Dendritic cell treated with granulocyte-macrophage colony-stimulating factor and Interleukin-4, amounts not matched to agents 40 ng/mL and 50 ng/mL, for 4 days (primary cell): ENCODE measurements at regions of chr9 and their contacts with region 1.

Region 1: DNA sequence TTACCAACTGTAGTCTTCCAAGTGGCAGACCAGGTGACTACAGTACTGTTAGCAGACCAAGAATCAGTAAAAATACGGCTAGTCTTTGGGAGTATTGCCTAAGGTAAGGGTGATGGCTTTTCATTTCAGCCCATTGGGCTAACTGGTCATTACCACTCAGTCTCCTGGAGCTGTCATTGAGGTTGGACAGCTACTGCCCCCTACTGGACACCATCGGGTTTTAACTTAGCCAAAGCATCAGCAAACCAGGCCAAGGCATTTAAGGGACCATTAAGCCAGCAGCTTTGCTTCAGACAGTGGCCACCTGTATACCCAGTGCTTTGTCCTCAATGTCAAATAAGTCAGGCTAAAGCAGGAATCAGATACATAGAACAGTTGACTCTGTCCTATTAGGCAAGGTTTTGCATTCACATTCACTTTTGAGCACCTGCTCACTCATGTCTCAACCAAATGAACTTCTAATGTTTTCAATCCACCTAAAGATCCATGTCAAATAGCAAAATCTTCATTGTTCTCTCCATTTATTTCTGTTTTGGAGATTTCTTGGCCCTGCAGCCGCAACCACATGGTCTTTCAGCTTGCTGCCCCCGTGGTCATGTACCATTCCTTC is 117.2 kb downstream of the INVS start:
- H3K4me3 Mint-ChIP-seq: no peak overlapping the region
- H3K27ac Mint-ChIP-seq: no peak overlapping the region
- H3K4me1 Mint-ChIP-seq: peaks cover 8% of the 10 kb centered on the region
- H3K27me3 Mint-ChIP-seq: no peaks in the 10 kb centered on the region

Region 2: GRCh38 chr9:99162759-99163364 is 1053.4 kb before region 1 on chr9:
- intact Hi-C with region 1: loop called (anchors 10 kb)
- H3K4me3 Mint-ChIP-seq: no peak overlapping the region
- H3K27ac Mint-ChIP-seq: no peak overlapping the region
- H3K4me1 Mint-ChIP-seq: peaks cover 5% of the 10 kb centered on the region
- H3K27me3 Mint-ChIP-seq: peaks cover 12% of the 10 kb centered on the region

Region 3: GRCh38 chr9:99266255-99267023 is 949.8 kb before region 1 on chr9:
- intact Hi-C with region 1: loop called (anchors 10 kb)
- H3K4me3 Mint-ChIP-seq: no peak overlapping the region
- H3K27ac Mint-ChIP-seq: no peak overlapping the region
- H3K4me1 Mint-ChIP-seq: peaks cover 23% of the 10 kb centered on the region
- H3K27me3 Mint-ChIP-seq: peaks cover 2% of the 10 kb centered on the region

Region 4: GRCh38 chr9:99807276-99807852 is 408.9 kb before region 1 on chr9:
- intact Hi-C with region 1: loop called (anchors 10 kb)
- H3K4me3 Mint-ChIP-seq: no peak overlapping the region
- H3K27ac Mint-ChIP-seq: no peak overlapping the region
- H3K4me1 Mint-ChIP-seq: peaks cover 11% of the 10 kb centered on the region
- H3K27me3 Mint-ChIP-seq: no peaks in the 10 kb centered on the region

Region 5: DNA sequence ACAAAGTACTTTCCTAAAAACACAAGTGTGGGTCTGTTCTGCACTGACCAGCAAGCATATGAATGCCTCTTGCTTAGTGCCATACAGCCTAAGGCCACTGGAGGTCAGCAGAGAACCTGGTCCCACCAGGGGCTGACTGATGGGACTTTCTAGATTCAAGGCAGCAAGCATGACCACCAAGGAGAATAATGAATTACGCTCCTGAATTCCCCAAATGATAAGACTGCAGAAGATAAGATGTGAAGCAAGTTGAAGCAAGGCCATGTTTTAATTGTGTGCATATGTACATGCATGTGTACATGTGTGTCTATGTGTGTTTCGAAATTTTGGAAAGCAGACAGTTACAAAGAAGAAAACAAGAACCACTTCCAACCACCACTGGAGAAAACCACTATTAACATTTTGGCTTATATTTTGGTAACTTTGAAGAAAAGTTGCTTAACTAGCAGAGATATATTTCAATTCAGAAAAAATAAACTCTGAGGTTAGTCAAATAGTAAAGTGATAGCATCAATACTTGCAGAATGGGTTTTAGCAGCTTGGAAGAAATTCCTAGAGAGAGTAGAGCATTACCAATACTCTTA is 188.0 kb before region 1 on chr9:
- intact Hi-C with region 1: loop called (anchors 1 kb)
- H3K4me3 Mint-ChIP-seq: no peak overlapping the region
- H3K27ac Mint-ChIP-seq: peak overlapping the region; percentile 19
- H3K4me1 Mint-ChIP-seq: peaks cover 36% of the 10 kb centered on the region
- H3K27me3 Mint-ChIP-seq: no peaks in the 10 kb centered on the region

Region 6: GRCh38 chr9:100150214-100150613 is 66.1 kb before region 1 on chr9:
- intact Hi-C with region 1: no loop called
- H3K4me3 Mint-ChIP-seq: no peak overlapping the region
- H3K27ac Mint-ChIP-seq: no peak overlapping the region
- H3K4me1 Mint-ChIP-seq: no peaks in the 10 kb centered on the region
- H3K27me3 Mint-ChIP-seq: no peaks in the 10 kb centered on the region

Region 7: DNA sequence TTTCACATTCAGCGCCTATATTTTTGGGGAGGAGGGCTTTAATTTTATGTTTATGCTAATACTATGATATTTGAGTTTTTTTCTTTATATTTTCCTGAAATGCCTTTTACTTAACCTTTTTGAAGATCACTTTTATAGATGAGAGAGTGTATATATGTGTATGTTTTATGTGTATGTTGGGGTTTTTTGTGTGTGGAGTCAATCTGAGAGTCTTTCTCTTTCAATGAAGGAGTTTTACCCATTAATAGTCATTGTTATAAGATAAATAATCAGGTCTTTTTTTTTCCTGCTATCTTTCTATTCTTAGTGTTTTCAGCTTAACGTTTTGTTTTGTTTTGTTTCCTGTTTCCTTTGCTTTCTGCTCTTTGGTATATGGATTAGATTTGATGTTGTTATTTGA is 24.2 kb after region 1 on chr9:
- intact Hi-C with region 1: no loop called
- H3K4me3 Mint-ChIP-seq: no peak overlapping the region
- H3K27ac Mint-ChIP-seq: no peak overlapping the region
- H3K4me1 Mint-ChIP-seq: no peaks in the 10 kb centered on the region
- H3K27me3 Mint-ChIP-seq: no peaks in the 10 kb centered on the region